ENCODE measurements at regions of chr1 and their contacts with region 1.

Region 1: GRCh38 chr1:35192853-35193664 is at the start of gene SFPQ:
- DNase-seq: peak; percentile 99
- H3K4me3 Mint-ChIP-seq: peak within 1 kb of the TSS; percentile 96
- H3K27ac Mint-ChIP-seq: peak within 1 kb of the TSS; percentile 99
- H3K4me1 Mint-ChIP-seq: peaks cover 34% of the 10 kb centered on the region
- H3K27me3 Mint-ChIP-seq: peaks cover 3% of the 10 kb centered on the region
- total RNA-seq, gene SFPQ: 385 and 392 TPM in 2 replicates

Region 2: GRCh38 chr1:34859446-34860200 is 333.4 kb before region 1 on chr1 and contains the start of gene SMIM12:
- intact Hi-C with region 1: loop called (anchors 5 kb)
- DNase-seq: peak; percentile 97
- H3K4me3 Mint-ChIP-seq: peak within 1 kb of the TSS; percentile 95
- H3K27ac Mint-ChIP-seq: peak within 1 kb of the TSS; percentile 99
- H3K4me1 Mint-ChIP-seq: peaks cover 43% of the 10 kb centered on the region
- H3K27me3 Mint-ChIP-seq: no peaks in the 10 kb centered on the region
- total RNA-seq, gene SMIM12: 63.2 TPM in 2 replicates

Region 3: GRCh38 chr1:35005711-35006110 is 187.3 kb before region 1 on chr1:
- intact Hi-C with region 1: no loop called
- DNase-seq: no peak
- H3K4me3 Mint-ChIP-seq: no peak overlapping the region
- H3K27ac Mint-ChIP-seq: no peak overlapping the region
- H3K4me1 Mint-ChIP-seq: no peaks in the 10 kb centered on the region
- H3K27me3 Mint-ChIP-seq: no peaks in the 10 kb centered on the region

Region 4: DNA sequence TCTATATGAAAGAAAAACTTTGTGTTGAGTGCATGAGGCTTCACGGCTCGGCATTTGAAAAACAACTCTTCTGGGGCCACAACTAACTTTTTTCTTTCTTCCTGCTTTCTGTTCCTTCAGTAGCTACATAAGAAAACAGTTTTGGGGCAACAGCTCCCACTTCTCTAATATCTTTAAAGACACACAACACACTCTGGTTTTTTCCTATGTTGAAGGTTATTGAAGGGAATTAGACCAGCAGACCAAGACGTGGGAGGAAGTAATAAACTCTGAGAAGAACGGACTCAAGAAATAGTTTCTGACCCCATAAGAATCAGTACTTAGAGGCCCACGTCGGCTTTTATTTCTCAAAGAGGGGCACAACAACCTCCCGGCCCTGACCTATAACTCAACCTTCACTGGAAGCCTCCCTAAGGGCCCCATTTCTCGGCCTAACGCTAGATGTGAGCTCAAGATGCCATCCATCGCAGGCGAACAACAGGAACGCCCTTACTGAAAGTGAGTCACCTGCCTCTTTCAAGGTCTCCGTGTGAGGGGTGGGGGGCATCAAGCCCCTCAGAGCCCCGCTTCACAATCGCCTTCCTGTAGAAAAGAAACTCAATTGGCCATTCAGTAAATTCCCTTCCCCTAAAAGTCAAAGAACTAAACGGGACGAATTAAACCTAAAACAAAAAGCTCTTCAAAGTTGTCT is 162.2 kb before region 1 on chr1:
- intact Hi-C with region 1: loop called (anchors 1 kb)
- DNase-seq: peak; percentile 82
- H3K4me3 Mint-ChIP-seq: peak overlapping the region; percentile 99
- H3K27ac Mint-ChIP-seq: peak overlapping the region; percentile 93
- H3K4me1 Mint-ChIP-seq: peaks cover 23% of the 10 kb centered on the region
- H3K27me3 Mint-ChIP-seq: peaks cover 2% of the 10 kb centered on the region

Region 5: DNA sequence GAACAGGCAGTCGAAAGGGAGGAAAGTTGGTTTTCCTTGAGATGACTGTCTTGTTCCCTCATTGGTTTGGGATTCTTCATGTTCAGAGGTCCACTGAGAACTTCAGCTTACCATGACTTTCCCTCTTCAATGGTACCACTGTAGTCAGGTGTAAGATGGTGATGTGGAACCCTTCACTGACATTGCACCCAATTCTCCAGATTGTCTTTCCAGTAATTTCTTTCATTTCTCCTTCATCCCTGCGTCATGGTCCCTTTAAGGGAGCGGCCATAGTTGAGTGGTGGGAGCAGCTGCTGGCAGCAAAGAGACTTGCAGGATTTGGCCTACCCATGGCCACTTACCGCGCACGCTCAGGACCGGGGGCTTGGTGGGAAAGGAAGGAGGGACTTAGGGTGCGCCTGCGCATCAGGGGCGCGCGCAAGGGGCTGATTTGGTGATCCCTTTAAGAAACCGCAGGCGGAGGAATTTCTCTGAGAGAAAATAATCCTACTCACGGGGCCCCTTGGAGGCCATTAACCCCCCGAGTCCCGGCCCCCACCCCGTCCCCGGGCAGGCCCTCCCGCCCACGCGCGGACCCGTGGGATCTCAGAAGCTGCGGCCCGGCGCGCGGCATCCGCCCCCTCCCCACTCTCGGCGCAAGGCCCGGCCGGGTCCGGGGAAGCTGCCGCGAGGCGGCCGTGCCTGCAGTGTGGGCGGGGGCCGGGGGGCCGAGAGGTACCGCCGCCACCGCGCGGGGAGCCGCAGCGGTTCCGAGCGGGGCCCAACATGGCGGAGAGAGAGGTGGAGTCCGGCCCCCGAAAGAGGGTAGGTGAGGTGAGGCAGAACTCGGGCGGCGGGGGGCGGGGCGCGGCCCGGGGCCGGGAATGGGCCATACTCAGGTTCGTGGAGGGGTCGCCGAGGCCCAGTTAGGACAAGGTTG is 75.5 kb after region 1 on chr1 and contains the start of gene ZMYM4:
- intact Hi-C with region 1: loop called (anchors 1 kb)
- DNase-seq: peak; percentile 97
- H3K4me3 Mint-ChIP-seq: peak within 1 kb of the TSS; percentile 95
- H3K27ac Mint-ChIP-seq: peak within 1 kb of the TSS; percentile 97
- H3K4me1 Mint-ChIP-seq: peaks cover 27% of the 10 kb centered on the region
- H3K27me3 Mint-ChIP-seq: peaks cover 6% of the 10 kb centered on the region
- total RNA-seq, gene ZMYM4: 25.6 and 31.0 TPM in 2 replicates

Region 6: GRCh38 chr1:35369922-35370671 is 177.0 kb after region 1 on chr1:
- intact Hi-C with region 1: no loop called
- DNase-seq: no peak
- H3K4me3 Mint-ChIP-seq: no peak overlapping the region
- H3K27ac Mint-ChIP-seq: no peak overlapping the region
- H3K4me1 Mint-ChIP-seq: no peaks in the 10 kb centered on the region
- H3K27me3 Mint-ChIP-seq: no peaks in the 10 kb centered on the region

Region 7: DNA sequence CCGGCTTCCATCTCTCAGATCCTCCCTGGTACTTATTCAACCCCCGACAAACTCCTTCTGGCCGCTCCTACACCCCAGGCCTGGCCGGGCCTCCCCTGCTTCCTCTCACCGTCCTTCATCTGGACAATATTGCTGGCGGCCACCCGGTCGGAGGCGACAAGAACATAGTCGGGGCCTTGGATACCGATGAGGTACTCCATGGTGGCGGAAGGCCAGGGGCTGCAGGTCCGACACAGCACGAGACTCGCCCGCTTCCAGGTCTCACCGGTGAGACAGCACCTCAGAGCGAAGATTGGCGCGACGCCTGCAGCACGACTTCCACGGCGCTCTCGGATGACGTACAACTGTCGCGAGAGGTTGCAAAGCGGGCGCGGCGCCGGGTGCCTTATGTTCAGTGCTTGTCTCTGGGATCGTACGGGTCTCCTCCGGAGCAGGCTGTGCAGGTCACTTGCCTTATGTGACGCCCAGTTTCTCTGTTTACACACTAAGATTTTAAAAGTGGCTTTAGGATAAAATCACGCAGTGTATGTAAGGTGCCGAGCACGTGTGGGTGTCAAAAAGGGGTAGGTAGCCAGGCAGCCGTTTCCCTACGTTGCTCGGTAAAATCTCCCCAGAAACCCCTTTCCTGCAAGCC is 448.3 kb after region 1 on chr1 and contains the start of gene PSMB2:
- intact Hi-C with region 1: loop called (anchors 5 kb)
- DNase-seq: peak; percentile 99
- H3K4me3 Mint-ChIP-seq: peak within 1 kb of the TSS; percentile 100
- H3K27ac Mint-ChIP-seq: peak within 1 kb of the TSS; percentile 99
- H3K4me1 Mint-ChIP-seq: peaks cover 23% of the 10 kb centered on the region
- H3K27me3 Mint-ChIP-seq: peaks cover 26% of the 10 kb centered on the region
- total RNA-seq, gene PSMB2: 133 TPM in 2 replicates

Region 8: GRCh38 chr1:36055706-36056105 is 862.6 kb after region 1 on chr1:
- intact Hi-C with region 1: no loop called
- DNase-seq: peak; percentile 34
- H3K4me3 Mint-ChIP-seq: no peak overlapping the region
- H3K27ac Mint-ChIP-seq: no peak overlapping the region
- H3K4me1 Mint-ChIP-seq: no peaks in the 10 kb centered on the region
- H3K27me3 Mint-ChIP-seq: no peaks in the 10 kb centered on the region

Region 9: DNA sequence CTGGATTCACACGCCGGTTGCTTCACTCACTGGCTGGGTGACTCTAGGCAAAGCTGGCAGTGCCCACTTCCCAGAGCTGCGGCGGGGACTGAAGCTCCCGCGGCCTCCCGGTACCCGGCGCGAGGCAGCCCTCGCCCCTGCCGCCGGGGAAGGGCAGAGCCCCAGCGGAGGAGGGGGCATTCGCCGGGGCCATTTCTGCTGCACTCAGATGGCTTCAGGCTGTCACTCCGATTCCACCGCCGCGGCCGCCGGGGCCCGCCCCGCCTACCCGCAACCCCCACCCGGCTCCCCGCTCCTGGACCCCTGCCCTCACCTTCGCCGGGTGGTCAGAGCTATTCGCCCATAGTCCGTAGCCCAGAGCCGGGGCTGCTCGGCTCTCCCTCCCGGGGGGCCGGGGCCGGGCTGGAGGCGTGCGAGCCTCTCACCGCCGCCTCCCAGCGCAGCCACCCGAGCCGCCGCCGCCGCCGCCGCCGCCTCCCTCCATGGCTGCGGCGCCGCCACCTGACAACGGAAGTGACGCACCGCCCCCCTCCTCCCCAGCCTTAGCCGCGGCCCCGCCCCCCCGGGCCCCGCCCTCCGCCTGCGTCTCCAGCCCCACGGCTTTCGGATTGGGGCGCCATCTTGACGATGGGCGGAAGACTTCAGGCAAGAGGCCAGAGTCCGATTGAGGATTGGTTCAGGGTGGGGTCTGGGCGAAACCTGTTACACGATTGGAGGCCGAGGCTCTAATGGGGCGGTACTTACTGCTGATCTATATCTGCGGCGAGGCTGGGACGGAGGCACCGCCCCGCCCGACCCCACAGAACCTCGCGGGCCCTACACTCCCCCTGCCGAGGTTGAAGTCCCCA is 1192.6 kb after region 1 on chr1 and contains the start of gene STK40:
- intact Hi-C with region 1: loop called (anchors 10 kb)
- DNase-seq: peak; percentile 99
- H3K4me3 Mint-ChIP-seq: peak within 1 kb of the TSS; percentile 92
- H3K27ac Mint-ChIP-seq: peak within 1 kb of the TSS; percentile 99
- H3K4me1 Mint-ChIP-seq: peaks cover 62% of the 10 kb centered on the region
- H3K27me3 Mint-ChIP-seq: no peaks in the 10 kb centered on the region
- total RNA-seq, gene STK40: 40.6 and 51.3 TPM in 2 replicates

Measured in activated CD4-positive, alpha-beta T cell treated with anti-CD3 and anti-CD28 coated beads, Interleukin-2, amount 10 ng/mL, durations not matched to agents 24 days and 14 days (primary cell).